Breast epithelium (tissue), 4 donors: ENCODE measurements at regions of chr11 and their contacts with region 1.

Region 1: DNA sequence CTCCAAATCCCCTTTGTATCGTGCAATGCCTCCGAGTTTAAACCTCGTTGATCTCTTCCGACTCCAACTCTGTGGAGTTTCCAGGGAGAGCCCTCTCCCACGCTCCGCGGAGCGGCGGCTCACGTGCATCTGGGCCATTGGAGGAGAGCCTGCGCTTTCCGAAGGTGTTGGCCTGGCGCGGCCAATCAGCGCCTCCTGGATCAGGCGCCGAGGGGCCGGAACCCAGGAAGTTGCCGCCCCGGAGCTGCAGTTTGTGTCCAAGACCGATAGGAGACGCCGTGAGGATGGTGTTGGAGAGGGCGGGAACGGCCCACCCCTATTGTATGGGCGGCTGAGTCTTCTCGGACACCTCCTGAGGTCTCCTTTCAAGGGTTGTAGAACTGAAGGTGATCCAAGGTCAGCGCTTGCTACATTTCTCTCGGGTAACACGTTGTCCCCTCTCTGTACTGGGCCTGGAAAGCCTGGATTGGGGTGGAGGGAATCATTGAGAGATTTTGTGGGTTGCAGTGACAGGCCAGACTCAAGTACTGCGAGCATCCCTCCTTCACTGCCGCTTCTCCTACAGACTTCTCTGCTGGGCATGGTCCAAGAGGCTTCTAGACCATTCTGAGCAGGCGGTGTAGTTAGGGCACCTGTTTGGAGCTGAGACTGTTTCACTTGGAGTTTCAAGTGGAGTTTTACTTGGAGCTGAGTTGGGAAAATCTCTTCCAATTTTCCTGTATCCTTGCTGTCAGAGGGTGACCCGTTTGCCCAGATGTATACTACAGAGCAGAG is 1.7 kb downstream of the ADAMTS15 start:
- DNase-seq: peak; percentile 71 to 86
- H3K4me3 ChIP-seq: peak overlapping the region; percentile 61 to 95 (median 69)
- H3K27ac ChIP-seq: peak overlapping the region; percentile 77 to 80
- H3K4me1 ChIP-seq: no peaks in the 10 kb centered on the region
- H3K27me3 ChIP-seq: no peaks in the 10 kb centered on the region
- CTCF ChIP-seq: peak; percentile 72 to 83 (median 75)
- POLR2A ChIP-seq: no peak

Region 2: GRCh38 chr11:128741916-128742315 is 1708.3 kb before region 1 on chr11:
- intact Hi-C with region 1: loop called (anchors 5 kb)
- DNase-seq: no peak
- H3K4me3 ChIP-seq: no peak overlapping the region
- H3K27ac ChIP-seq: no peak overlapping the region
- H3K4me1 ChIP-seq: no peaks in the 10 kb centered on the region
- H3K27me3 ChIP-seq: no peaks in the 10 kb centered on the region
- CTCF ChIP-seq: no peak
- POLR2A ChIP-seq: no peak

Region 3: GRCh38 chr11:130379276-130379675 is 70.9 kb before region 1 on chr11:
- intact Hi-C with region 1: no loop called
- DNase-seq: no peak
- H3K4me3 ChIP-seq: no peak overlapping the region
- H3K27ac ChIP-seq: no peak overlapping the region
- H3K4me1 ChIP-seq: no peaks in the 10 kb centered on the region
- H3K27me3 ChIP-seq: no peaks in the 10 kb centered on the region
- CTCF ChIP-seq: no peak
- POLR2A ChIP-seq: no peak

Region 4: GRCh38 chr11:131378931-131379330 is 928.7 kb after region 1 on chr11:
- intact Hi-C with region 1: no loop called
- DNase-seq: no peak
- H3K4me3 ChIP-seq: no peak overlapping the region
- H3K27ac ChIP-seq: no peak overlapping the region
- H3K4me1 ChIP-seq: no peaks in the 10 kb centered on the region
- H3K27me3 ChIP-seq: peaks cover 0 to 18% of the 10 kb centered on the region in 2 donors
- CTCF ChIP-seq: no peak
- POLR2A ChIP-seq: no peak